Colonic mucosa (tissue), 4 donors: ENCODE measurements at regions of chr9 and their contacts with region 1.

Region 1: GRCh38 chr9:134323741-134324358 is 2.4 kb upstream of the RXRA start:
- DNase-seq: peak; percentile 78
- H3K4me3 ChIP-seq: no peak overlapping the region
- H3K27ac ChIP-seq: no peak overlapping the region
- H3K4me1 ChIP-seq: peaks cover 14% of the 10 kb centered on the region
- H3K27me3 ChIP-seq: no peaks in the 10 kb centered on the region
- CTCF ChIP-seq: no peak

Region 2: DNA sequence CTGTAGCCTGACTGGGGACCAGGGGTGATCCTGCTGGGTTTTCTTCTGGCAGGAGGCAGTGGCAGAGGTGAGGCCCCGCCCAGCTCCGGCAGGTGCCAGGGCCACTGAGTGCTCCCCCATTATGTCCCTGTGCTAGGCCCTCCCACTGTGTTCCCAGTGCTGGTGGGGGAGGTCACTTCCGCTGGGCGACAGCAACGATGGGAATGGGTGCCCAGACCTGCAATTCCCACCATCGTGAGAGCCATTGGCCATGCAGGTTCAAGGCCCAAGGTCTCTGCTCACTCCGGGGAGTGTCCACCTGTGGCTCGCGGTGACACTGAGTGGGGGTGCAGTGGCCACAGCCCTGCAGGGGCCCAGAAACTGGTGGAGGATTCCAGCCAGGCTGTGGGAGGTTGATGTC is 101.0 kb after region 1 on chr9:
- intact Hi-C with region 1: loop called (anchors 5 kb)
- DNase-seq: no peak
- H3K4me3 ChIP-seq: no peak overlapping the region
- H3K27ac ChIP-seq: no peak overlapping the region
- H3K4me1 ChIP-seq: peaks cover 6% of the 10 kb centered on the region
- H3K27me3 ChIP-seq: no peaks in the 10 kb centered on the region
- CTCF ChIP-seq: no peak